SK-N-SH (cell line): ENCODE measurements at regions of chr1 and their contacts with region 1.

Region 1: DNA sequence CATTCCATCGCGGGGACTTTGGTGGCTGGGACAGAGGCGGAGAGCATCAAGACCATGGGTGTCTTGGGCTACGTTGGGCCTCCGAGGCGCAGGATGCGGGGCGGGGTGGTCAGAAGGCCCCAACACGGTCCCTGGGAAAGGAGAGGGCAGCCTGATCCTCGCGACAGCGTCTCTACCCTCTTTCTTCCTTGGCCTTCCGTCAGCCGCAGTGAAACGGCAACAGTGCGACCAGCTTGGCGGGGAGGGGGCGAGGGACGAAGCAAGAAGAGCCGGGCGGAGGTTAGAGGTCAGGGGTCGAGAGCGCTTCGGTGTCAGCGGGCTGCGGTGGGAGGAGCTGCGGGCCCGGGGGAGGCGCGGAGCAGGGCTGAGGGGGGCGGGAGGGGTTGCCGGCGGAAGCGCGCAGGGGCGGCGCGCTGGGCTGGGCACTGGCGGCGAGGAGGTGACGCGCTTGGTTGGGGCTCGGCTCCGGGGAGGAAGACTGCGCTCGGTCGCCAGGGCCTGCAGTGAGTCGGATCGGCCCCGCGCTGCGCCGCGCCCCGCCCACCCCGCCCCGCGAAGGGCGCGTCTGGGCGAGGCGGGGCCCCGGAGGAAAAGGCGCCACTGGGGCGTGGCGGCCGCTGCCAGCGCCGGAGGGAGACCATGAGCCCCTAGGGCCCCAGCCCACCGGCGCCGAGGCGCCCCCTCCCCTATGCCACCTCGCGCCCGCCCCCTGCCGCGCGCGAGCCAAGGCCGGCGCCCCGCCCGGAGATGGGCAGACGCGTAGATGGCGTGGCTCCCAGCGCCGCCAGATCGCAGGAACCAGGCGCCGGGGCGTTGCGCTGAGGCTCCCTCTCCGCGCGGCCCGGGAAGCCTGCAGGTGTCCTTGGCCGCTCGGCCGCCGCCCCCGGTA is at the start of gene KCNC4:
- DNase-seq: peak; percentile 88
- H3K4me3 ChIP-seq: peak within 1 kb of the TSS; percentile 54
- H3K27ac ChIP-seq: no peak within 1 kb of the TSS; a peak in 1 of 4 replicates
- H3K4me1 ChIP-seq: peaks cover 0 to 57% of the 10 kb centered on the region in 2 experiments; a peak in 2 of 4 replicates
- H3K27me3 ChIP-seq: peaks cover 23% of the 10 kb centered on the region
- CTCF ChIP-seq: no peak
- EP300 ChIP-seq: no peak
- RAD21 ChIP-seq: no peak
- polyA plus RNA-seq, gene KCNC4: 0.37 and 0.51 TPM in 2 replicates

Region 2: DNA sequence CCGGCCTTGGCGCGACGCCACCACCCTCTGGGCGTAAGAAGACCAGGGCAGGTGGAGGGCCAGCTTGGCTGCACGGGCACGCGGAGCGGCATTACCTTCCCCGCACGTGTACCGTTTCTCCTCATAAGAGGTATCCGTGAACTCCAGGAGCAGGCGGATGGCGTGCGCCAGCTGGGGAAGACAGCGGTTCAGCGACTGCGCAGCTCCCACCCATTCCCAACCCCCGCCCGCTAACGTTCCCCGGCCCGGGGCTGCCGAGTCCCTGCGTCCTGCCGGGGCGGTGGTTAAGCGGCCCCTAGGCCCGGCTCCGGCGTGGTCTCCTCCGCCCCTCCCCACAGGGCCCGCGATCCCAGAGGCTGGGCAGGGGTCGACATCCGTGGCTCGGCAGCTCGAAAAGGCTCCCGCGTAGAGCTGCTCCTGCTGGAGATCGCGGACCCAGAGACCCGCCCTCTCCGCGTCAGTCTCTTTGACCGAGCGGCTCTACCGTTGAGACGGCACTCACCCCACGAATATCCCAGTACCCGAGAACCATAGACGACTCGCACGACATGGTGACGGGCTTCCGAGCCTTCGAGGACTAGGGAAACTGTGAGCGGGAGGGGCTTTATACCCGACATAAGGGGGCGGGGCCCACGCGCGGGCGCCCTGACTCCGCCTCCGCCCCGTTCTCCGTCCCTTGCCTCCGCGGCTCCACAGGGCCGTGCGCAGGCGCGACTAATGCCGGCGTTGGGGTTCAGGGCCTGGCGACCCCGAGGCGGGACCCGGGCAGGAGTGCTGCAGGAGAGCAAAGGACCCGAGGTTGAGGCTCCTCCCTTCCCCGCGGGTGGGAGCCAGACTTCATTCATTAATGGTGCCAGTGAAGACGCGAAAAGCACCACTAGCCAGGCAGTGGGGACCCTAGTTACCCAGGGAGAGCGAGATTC is 470.0 kb before region 1 on chr1:
- CTCF ChIA-PET with region 1: no interaction called
- POLR2A ChIA-PET with region 1: no interaction called
- DNase-seq: peak; percentile 96
- H3K4me3 ChIP-seq: peak overlapping the region; percentile 73 to 81
- H3K27ac ChIP-seq: peak overlapping the region in 1 of 2 experiments; percentile 80; a peak in 1 of 4 replicates
- H3K4me1 ChIP-seq: peaks cover 0 to 11% of the 10 kb centered on the region in 2 experiments; a peak in 2 of 4 replicates
- H3K27me3 ChIP-seq: no peaks in the 10 kb centered on the region
- CTCF ChIP-seq: no peak
- EP300 ChIP-seq: no peak
- RAD21 ChIP-seq: no peak

Region 3: DNA sequence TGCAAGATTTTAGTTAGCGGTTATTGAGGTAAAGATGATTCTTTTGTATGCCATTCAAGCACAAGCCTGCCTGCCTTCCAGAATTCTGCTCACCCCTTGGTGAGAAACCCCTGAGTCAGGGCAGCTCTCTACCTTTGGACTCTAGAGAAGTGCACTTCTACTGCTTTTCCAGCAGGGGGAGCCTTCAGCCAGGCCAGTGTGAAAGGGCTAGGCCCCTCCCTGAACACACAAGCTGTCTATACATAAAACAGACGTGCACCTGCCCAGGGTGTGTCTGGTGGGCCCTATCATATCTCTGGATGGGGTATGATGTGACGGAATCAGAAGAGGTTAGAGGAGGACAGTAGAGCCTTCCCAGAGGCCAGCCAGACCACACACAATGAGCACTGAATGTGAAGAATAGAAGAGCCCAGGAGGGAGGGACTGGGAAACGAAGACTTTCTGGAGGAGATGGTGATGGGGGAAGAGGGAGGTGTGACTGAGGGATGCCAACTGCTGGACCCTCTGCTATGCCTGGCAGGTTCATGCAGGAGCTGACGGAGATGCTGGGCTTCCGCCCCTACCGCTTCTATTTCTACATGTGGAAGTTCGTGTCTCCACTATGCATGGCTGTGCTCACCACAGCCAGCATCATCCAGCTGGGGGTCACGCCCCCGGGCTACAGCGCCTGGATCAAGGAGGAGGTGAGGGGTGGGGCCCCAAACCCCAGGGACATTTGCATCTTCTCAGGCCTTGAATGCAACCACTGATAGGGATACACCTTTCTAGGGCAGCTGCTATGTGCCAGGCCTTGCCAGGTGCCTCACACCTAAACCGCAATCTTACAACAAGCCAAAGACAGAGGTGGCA is 12.8 kb before region 1 on chr1:
- CTCF ChIA-PET with region 1: interaction called, 163 read pairs
- POLR2A ChIA-PET with region 1: no interaction called
- DNase-seq: peak; percentile 89
- H3K4me3 ChIP-seq: peak overlapping the region in 1 of 2 experiments; percentile 11; a peak in 1 of 4 replicates
- H3K27ac ChIP-seq: no peak overlapping the region; a peak in 1 of 4 replicates
- H3K4me1 ChIP-seq: peaks cover 0 to 20% of the 10 kb centered on the region in 2 experiments; a peak in 1 of 4 replicates
- H3K27me3 ChIP-seq: no peaks in the 10 kb centered on the region
- CTCF ChIP-seq: peak; percentile 90
- EP300 ChIP-seq: no peak
- RAD21 ChIP-seq: peak; percentile 68

Region 4: GRCh38 chr1:110235834-110236682 is 26.1 kb after region 1 on chr1:
- CTCF ChIA-PET with region 1: interaction called, 31 read pairs
- POLR2A ChIA-PET with region 1: no interaction called
- DNase-seq: no peak
- H3K4me3 ChIP-seq: no peak overlapping the region
- H3K27ac ChIP-seq: peak overlapping the region; percentile 14 to 98; a peak in 3 of 4 replicates
- H3K4me1 ChIP-seq: peaks cover 0 to 56% of the 10 kb centered on the region in 2 experiments; a peak in 2 of 4 replicates
- H3K27me3 ChIP-seq: no peaks in the 10 kb centered on the region
- CTCF ChIP-seq: no peak
- EP300 ChIP-seq: no peak
- RAD21 ChIP-seq: no peak

Region 5: DNA sequence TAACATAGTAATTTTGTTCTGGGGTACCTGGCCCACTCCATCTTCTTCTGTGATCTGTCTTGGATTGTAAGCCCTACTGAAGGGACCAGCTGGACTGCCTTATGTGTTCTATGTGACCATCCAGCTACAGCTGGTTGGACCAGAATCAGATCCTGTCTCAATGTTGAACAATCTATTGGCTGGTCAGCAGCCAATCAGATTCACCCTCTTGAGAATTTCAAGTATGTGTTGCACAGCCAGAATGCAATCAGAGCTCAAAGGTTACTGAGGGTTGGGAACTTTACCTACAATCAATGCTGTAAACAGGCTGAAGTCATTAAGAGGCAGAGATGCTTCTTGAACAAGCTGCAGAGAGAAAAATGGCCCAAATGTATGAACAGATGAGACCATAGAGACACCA is 62.1 kb after region 1 on chr1:
- CTCF ChIA-PET with region 1: interaction called, 18 read pairs
- POLR2A ChIA-PET with region 1: no interaction called
- DNase-seq: no peak
- H3K4me3 ChIP-seq: no peak overlapping the region
- H3K27ac ChIP-seq: no peak overlapping the region
- H3K4me1 ChIP-seq: no peaks in the 10 kb centered on the region; a peak in 1 of 4 replicates
- H3K27me3 ChIP-seq: no peaks in the 10 kb centered on the region
- CTCF ChIP-seq: no peak
- EP300 ChIP-seq: no peak
- RAD21 ChIP-seq: no peak

Region 6: GRCh38 chr1:110312188-110313121 is 102.5 kb after region 1 on chr1:
- CTCF ChIA-PET with region 1: interaction called, 1,300 read pairs
- POLR2A ChIA-PET with region 1: interaction called, 7 read pairs
- DNase-seq: peak; percentile 77
- H3K4me3 ChIP-seq: peak overlapping the region in 1 of 2 experiments; percentile 49; a peak in 1 of 4 replicates
- H3K27ac ChIP-seq: no peak overlapping the region
- H3K4me1 ChIP-seq: peaks cover 0 to 4% of the 10 kb centered on the region in 2 experiments; a peak in 1 of 4 replicates
- H3K27me3 ChIP-seq: no peaks in the 10 kb centered on the region; the same call in 1 of the 2 replicates
- CTCF ChIP-seq: peak; percentile 94
- EP300 ChIP-seq: no peak
- RAD21 ChIP-seq: peak; percentile 100